ENCODE measurements at regions of chr3 and their contacts with region 1.

Region 1: GRCh38 chr3:170961616-170962400 is 53.4 kb upstream of the EIF5A2 start:
- DNase-seq: no peak
- H3K4me3 ChIP-seq: no peak overlapping the region
- H3K27ac ChIP-seq: no peak overlapping the region
- H3K4me1 ChIP-seq: no peaks in the 10 kb centered on the region
- H3K27me3 ChIP-seq: no peaks in the 10 kb centered on the region
- CTCF ChIP-seq: peak; percentile 49 to 75 (median 54)
- POLR2A ChIP-seq: no peak

Region 2: DNA sequence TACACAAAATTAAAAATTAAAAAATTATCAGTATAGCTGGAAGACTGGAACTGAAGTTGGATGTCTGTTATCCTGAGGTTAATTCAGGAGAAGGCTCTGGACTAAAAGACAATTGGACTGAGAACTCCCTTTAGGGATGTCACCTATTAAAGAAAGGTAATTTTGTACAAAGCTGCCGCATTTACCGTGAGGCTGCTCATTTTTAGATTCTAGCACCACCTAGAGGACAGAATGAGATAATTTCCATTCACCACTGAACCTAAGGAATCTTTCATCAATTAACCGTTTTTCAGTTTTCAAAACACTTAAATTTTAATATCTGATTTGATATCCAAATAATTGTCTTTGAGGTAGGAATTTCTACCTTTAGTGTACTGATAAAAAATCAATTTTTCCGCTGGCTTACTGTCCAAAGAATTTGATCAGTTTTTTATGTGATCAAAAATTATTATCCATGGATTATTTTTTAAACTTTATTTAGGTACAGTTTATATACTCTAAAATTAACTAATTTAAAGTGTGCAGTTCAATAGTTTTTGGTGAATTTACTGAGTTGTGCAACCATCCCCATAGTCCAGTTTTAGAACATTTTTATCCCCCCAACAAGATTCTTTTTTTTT is 605.1 kb after region 1 on chr3:
- intact Hi-C with region 1: loop called (anchors 10 kb)
- DNase-seq: no peak
- H3K4me3 ChIP-seq: no peak overlapping the region
- H3K27ac ChIP-seq: no peak overlapping the region
- H3K4me1 ChIP-seq: no peaks in the 10 kb centered on the region
- H3K27me3 ChIP-seq: no peaks in the 10 kb centered on the region
- CTCF ChIP-seq: peak; percentile 75 to 86 (median 82)
- POLR2A ChIP-seq: no peak

Measured in uterus (tissue), 4 donors.